ENCODE measurements at regions of chrX and their contacts with region 1.

Region 1: GRCh38 chrX:3638280-3638873 is 75.1 kb downstream of the PRKX start:
- DNase-seq: peak; percentile 11 to 39
- H3K4me3 ChIP-seq: no peak overlapping the region
- H3K27ac ChIP-seq: no peak overlapping the region
- H3K4me1 ChIP-seq: no peaks in the 10 kb centered on the region
- H3K27me3 ChIP-seq: no peaks in the 10 kb centered on the region
- CTCF ChIP-seq: peak; percentile 89

Region 2: GRCh38 chrX:3037218-3037617 is 601.2 kb before region 1 on chrX:
- CTCF ChIA-PET with region 1: no interaction called
- POLR2A ChIA-PET with region 1: no interaction called
- intact Hi-C with region 1: loop called (anchors 5 kb)
- DNase-seq: no peak
- H3K4me3 ChIP-seq: no peak overlapping the region
- H3K27ac ChIP-seq: no peak overlapping the region
- H3K4me1 ChIP-seq: no peaks in the 10 kb centered on the region
- H3K27me3 ChIP-seq: no peaks in the 10 kb centered on the region
- CTCF ChIP-seq: no peak

Region 3: GRCh38 chrX:3393581-3394111 is 244.7 kb before region 1 on chrX:
- CTCF ChIA-PET with region 1: no interaction called
- POLR2A ChIA-PET with region 1: no interaction called
- intact Hi-C with region 1: no loop called
- DNase-seq: no peak
- H3K4me3 ChIP-seq: no peak overlapping the region
- H3K27ac ChIP-seq: no peak overlapping the region
- H3K4me1 ChIP-seq: no peaks in the 10 kb centered on the region
- H3K27me3 ChIP-seq: peaks cover 40% of the 10 kb centered on the region
- CTCF ChIP-seq: no peak